Heart left ventricle (tissue), 16 donors: ENCODE measurements at regions of chr10 and their contacts with region 1.

Region 1: DNA sequence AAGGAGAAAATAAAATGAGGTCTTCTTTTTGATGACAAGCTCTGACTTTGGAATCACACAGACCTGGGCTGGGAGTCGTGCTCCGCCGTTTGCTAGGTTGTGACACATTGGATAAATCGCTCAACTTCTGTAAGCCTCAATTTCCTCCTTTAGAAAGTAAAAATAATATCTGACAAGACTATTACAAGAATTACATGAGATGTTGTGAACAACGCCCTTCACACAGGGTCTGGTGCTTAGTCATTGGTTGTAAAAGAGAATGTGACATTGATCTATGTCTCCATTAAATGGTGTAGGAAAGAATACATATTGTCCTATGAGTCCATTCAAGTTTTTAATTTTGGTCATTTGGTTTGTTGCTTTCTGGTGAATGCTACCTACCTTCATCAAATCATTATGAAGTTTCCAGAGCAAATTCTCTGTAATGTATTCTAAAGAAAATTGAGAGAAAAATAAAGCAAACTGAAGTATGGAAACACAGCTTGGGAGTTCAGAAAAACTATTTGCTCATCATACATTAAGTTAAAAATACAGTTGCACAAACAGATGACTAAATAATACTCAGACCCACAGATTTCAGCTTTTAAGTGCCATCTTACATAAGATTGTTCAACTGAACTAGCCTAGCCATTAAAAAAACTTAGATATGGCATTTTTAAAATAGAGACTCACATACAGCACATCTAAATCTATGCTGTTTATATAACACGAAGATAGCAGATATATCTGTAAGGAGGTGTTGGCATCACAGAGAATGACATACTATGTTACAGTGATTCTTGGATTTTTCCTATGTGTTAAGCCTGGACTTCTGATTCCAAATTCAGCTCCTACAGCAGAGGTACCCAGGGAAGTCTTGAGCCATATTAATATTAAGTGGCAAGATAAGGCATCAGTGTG is 12.3 kb upstream of the ADRB1 start:
- DNase-seq: no peak
- ATAC-seq: no peak
- H3K4me3 ChIP-seq: no peak overlapping the region
- H3K27ac ChIP-seq: no peak overlapping the region
- H3K4me1 ChIP-seq: peaks cover 0 to 15% (median 5%) of the 10 kb centered on the region in 12 donors
- H3K27me3 ChIP-seq: no peaks in the 10 kb centered on the region
- CTCF ChIP-seq: no peak
- POLR2A ChIP-seq: no peak

Region 2: DNA sequence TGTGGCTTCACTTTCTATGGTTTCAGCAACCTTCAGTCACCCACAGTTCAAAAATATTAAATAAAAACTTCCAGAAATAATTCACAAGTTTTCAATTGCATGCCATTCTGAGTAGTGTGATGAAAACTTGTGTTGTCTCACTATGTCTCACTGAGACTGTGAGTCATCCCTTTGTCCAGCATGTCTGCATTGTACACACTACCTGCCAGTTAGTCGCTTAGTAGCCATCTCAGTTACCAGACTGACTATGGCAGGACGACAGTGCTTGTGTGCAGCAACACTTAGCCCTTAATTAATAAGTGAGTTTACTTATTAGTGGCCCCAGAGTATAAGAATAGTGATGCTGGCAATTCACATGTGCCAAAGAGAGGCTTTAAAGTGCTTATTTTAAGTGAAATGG is 120.2 kb after region 1 on chr10:
- intact Hi-C with region 1: loop called in 1 of 10 experiments (anchors 5 kb)
- DNase-seq: no peak
- ATAC-seq: no peak
- H3K4me3 ChIP-seq: no peak overlapping the region
- H3K27ac ChIP-seq: no peak overlapping the region
- H3K4me1 ChIP-seq: no peaks in the 10 kb centered on the region
- H3K27me3 ChIP-seq: no peaks in the 10 kb centered on the region
- CTCF ChIP-seq: no peak
- POLR2A ChIP-seq: no peak